Activated naive CD4-positive, alpha-beta T cell treated with anti-CD3 and anti-CD28 coated beads for 36 hours (primary cell): ENCODE measurements at regions of chr3 and their contacts with region 1.

Region 1: GRCh38 chr3:184082465-184082864 is 14.4 kb upstream of the HTR3E start:
- DNase-seq: no peak
- H3K4me3 Mint-ChIP-seq: no peak overlapping the region
- H3K27ac Mint-ChIP-seq: no peak overlapping the region
- H3K4me1 Mint-ChIP-seq: peaks cover 7% of the 10 kb centered on the region
- H3K27me3 Mint-ChIP-seq: no peaks in the 10 kb centered on the region

Region 2: GRCh38 chr3:184003187-184003967 is 79.1 kb before region 1 on chr3:
- CTCF ChIA-PET with region 1: no interaction called
- intact Hi-C with region 1: no loop called
- DNase-seq: no peak
- H3K4me3 Mint-ChIP-seq: no peak overlapping the region
- H3K27ac Mint-ChIP-seq: no peak overlapping the region
- H3K4me1 Mint-ChIP-seq: peaks cover 10% of the 10 kb centered on the region
- H3K27me3 Mint-ChIP-seq: no peaks in the 10 kb centered on the region

Region 3: GRCh38 chr3:184040010-184040409 is 42.5 kb before region 1 on chr3:
- CTCF ChIA-PET with region 1: no interaction called
- intact Hi-C with region 1: loop called (anchors 5 kb)
- DNase-seq: no peak
- H3K4me3 Mint-ChIP-seq: no peak overlapping the region
- H3K27ac Mint-ChIP-seq: no peak overlapping the region
- H3K4me1 Mint-ChIP-seq: no peaks in the 10 kb centered on the region
- H3K27me3 Mint-ChIP-seq: no peaks in the 10 kb centered on the region